ENCODE measurements at regions of chr16 and their contacts with region 1.

Region 1: DNA sequence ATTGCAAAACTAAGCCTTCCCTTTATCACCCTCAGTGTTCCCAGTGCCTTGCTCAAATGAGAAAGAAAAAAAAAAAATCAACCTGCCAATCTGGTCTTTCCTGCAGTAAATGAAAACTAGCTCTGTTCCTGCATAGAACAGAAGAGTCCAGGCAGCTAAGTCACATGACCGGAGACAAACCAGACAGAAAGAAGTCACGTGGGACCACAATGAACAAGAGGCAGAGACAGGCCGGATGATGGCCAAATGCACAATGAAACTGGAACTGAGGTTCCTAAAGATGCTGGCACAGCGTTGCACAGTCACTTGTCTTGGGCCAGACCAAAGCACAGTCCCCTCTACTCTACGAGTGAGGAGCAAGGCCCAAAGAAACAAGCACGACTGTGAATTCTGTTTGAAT is 172.5 kb downstream of the GRIN2A start:
- H3K4me3 ChIP-seq: no peak overlapping the region
- H3K27ac ChIP-seq: no peak overlapping the region
- H3K4me1 ChIP-seq: no peaks in the 10 kb centered on the region
- CTCF ChIP-seq: no peak

Region 2: DNA sequence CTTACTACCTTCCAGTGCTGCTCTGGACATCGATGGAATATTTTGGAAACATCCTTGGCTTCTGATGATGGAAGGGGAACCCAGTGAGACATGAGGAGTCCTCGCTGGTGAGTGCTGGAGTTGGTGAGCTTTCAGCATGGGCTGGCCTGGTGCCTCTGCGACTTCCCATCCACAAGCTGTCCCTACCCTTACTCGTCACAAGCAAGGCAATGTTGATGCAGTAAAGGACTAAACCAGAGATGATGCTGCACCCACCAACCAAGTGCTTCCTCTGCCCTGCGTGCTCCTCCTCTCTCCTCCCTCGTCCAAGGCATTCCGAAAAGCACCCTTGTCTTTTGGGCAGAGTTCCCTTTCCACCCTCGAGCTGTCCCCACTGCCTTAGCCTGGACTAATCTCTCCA is 17.9 kb after region 1 on chr16:
- CTCF ChIA-PET with region 1: interaction called, 7 read pairs
- POLR2A ChIA-PET with region 1: interaction called, 15 read pairs
- H3K4me3 ChIP-seq: no peak overlapping the region
- H3K27ac ChIP-seq: no peak overlapping the region
- H3K4me1 ChIP-seq: no peaks in the 10 kb centered on the region
- CTCF ChIP-seq: no peak